ENCODE measurements at regions of chr16 and their contacts with region 1.

Region 1: DNA sequence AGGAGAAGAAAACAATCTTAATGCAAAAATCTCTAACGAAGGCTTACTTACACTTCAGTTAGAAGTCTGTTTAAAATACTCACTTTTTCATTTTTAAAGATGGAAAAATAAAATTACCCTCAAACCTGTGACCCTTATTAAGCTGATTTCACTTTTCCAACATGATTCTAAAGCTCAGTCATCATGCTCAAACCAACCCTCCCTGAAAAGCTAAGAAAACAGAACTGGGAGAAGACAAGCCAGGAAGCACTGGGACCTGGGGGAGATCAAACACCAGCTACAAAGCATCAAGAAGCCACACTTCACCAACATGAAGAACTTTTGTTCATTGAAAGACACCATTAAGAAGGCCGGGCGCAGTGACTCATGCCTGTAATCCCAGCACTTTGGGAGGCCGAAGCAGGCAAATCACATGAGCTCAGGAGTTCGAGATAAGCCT is 88.8 kb downstream of the LITAF start:
- DNase-seq: peak in 1 of 2 donors; percentile 78
- H3K4me3 ChIP-seq: no peak overlapping the region
- H3K27ac ChIP-seq: peak overlapping the region; percentile 87 to 96
- H3K4me1 ChIP-seq: peaks cover 18 to 41% of the 10 kb centered on the region in 2 donors
- H3K27me3 ChIP-seq: no peaks in the 10 kb centered on the region
- CTCF ChIP-seq: no peak

Region 2: DNA sequence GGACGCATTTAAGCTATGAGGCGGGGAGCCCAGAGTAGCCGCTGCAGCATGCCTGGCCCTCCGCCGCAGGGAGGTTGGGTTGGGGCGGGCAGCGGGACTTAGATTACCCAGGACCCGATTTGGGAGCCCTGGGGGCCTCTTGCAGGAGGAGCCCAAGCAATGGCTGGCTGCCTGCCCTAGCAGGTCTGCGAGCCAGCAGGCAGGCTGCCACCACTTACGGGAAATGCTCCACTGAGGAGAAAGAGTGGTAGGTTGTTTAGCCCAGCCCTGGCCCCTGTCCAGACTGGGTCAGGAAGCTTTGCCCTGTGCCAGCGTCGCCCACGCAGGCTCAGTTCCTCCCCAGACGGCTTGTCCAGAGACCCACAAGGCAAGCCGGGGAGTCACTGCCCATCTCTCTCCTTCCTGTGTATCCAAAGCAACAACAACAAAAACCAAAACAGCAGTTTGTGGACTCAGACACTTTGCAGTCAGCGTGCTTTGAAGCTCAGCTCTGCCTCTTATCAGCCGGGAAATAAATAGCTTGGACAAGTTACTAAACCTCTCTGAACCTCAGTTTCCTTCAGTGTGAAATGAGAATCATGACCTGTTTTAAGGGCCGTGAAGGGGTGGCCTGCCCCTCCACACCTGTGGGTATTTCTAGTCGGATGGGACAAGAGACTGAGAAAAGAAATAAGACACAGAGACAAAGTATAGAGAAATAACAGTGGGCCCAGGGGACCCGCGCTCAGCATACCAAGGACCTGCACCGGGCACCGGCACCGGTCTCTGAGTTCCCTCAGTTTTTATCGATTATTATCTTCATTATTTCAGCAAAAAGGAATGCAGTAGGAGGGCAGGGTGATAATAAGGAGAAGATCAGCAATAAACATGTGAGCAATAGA is 668.8 kb before region 1 on chr16:
- intact Hi-C with region 1: loop called (anchors 5 kb)
- DNase-seq: peak; percentile 79 to 98
- H3K4me3 ChIP-seq: peak overlapping the region in 1 of 2 donors; percentile 30
- H3K27ac ChIP-seq: peak overlapping the region; percentile 93 to 99
- H3K4me1 ChIP-seq: peaks cover 10 to 25% of the 10 kb centered on the region in 2 donors
- H3K27me3 ChIP-seq: no peaks in the 10 kb centered on the region
- CTCF ChIP-seq: no peak

Region 3: DNA sequence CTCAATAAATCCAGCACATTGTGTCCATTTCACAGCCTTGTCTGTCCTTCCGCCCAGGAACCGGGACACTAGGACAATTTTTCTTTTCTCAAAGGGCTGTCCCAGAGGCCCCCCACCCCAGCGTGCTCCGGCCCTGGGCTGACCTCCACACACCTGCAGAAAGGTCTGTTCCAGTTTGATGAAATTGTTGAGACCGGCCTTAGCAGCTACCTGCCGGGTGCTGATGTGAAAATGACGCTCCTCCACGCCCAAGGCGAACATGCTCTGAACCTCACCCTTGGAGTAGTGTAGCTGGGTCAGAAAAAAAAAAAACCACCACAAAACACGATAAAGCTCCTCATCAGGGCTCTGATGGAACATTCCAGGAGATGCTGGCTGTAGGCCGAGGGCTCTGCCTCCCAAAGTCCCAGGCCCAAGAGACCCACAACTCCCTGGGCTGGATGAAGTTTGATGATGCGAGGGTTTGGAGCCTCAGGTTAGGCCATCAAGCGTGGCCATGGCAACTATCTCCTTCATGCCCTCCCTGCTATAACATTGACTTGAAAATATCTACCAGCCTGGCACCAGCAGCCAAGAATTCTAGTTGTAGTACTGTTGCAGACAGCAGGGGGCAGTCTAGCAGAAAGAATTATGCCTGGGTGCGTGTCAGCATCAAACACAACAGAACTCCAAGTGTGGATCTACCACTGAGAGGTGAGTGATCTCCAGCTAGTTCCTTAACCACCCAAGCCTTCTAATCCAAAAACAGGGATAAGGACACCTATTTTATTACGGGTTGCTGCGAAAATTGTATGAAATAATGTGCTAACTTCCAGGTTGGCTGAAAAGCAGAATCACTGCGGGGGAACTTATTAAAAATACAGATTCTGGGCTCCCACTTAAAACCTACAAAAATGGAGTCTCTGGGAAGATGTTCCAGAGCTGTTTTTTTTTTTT is 90.6 kb before region 1 on chr16:
- intact Hi-C with region 1: loop called (anchors 2 kb)
- DNase-seq: peak in 1 of 2 donors; percentile 91
- H3K4me3 ChIP-seq: no peak overlapping the region
- H3K27ac ChIP-seq: no peak overlapping the region
- H3K4me1 ChIP-seq: peaks cover 3 to 19% of the 10 kb centered on the region in 2 donors
- H3K27me3 ChIP-seq: no peaks in the 10 kb centered on the region
- CTCF ChIP-seq: peak; percentile 61 to 67 (median 65)

Region 4: GRCh38 chr16:11639925-11640899 is 142.3 kb after region 1 on chr16:
- intact Hi-C with region 1: loop called (anchors 1 kb)
- DNase-seq: peak; percentile 83 to 95
- H3K4me3 ChIP-seq: peak overlapping the region in 1 of 2 donors; percentile 17
- H3K27ac ChIP-seq: peak overlapping the region; percentile 88 to 93
- H3K4me1 ChIP-seq: peaks cover 10 to 19% of the 10 kb centered on the region in 2 donors
- H3K27me3 ChIP-seq: no peaks in the 10 kb centered on the region
- CTCF ChIP-seq: no peak

Region 5: DNA sequence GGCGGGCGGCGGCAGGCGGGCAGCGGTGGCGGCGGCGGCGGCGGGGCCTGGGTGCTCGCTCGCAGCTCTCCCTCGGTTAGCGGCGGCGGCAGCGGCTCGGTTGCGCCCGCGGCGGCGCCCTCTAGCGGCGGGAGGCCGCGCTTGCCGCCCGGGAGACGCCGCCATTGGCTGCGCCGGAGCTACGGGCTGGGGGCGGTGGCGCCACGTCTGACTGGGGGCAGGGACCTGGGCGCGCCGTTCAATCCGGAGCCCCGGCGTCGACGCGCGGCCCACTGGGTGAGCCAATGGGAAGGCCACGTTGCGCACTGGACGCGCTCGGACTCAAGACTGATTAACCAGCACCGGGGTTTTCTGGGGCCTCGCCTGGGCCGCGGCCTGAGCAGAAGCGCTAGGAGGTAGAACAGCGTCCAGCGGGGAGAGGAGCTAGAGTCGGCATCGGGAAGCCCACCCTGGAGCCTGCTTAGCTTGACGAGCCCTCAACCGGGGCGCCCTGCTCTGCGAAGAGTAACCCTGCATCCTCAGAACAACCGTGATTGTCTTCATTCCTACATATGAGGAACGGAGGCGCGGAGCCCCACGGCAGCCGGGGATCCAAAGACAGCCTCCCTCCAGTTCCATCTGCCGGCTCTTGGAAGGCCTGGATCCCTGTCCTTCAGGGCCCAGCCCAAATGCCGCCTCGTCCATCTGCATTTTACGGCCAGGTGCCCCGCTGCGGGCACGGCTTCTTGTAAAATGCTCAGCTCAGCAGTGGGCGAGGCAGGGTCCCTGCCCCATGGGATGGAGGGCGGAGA is 299.5 kb after region 1 on chr16 and contains the start of gene ZC3H7A:
- intact Hi-C with region 1: loop called (anchors 5 kb)
- DNase-seq: peak; percentile 85 to 98
- H3K4me3 ChIP-seq: peak within 1 kb of the TSS; percentile 70 to 91
- H3K27ac ChIP-seq: peak within 1 kb of the TSS; percentile 97 to 98
- H3K4me1 ChIP-seq: peaks cover 14 to 48% of the 10 kb centered on the region in 2 donors
- H3K27me3 ChIP-seq: no peaks in the 10 kb centered on the region
- CTCF ChIP-seq: peak; percentile 36 to 99 (median 53)
- total RNA-seq, gene ZC3H7A: 56.9 TPM

Measured in ascending aorta (tissue), 2 donors.